PC-9 (cell line): ENCODE measurements at regions of chr14 and their contacts with region 1.

Region 1: DNA sequence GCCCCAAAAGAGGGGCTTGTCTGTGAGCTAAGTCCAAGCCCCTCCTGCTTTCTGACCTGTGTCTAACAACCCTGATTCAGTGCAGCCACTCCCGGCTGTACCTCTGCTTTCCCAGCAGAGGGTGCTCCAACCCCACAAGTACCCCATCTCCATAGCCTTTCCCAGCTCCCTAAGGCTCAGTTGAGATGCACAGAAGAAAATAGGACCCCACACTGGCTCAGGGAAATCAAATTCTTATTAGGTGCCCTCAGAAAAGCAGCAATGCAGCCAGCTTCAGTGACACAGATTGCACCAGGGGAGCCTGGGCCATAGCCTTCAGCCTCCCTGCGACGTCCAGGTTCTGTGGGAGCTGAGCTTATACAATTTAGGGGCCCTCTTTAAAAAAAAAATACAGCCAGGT is 49.9 kb downstream of the LRRC74A start:
- DNase-seq: peak; percentile 78 to 87
- H3K4me3 ChIP-seq: no peak overlapping the region
- H3K27ac ChIP-seq: no peak overlapping the region
- H3K4me1 ChIP-seq: no peaks in the 10 kb centered on the region
- H3K27me3 ChIP-seq: peaks cover 7% of the 10 kb centered on the region
- CTCF ChIP-seq: peak; percentile 100

Region 2: GRCh38 chr14:76050797-76051392 is 825.2 kb before region 1 on chr14:
- CTCF ChIA-PET with region 1: no interaction called
- POLR2A ChIA-PET with region 1: no interaction called
- intact Hi-C with region 1: loop called (anchors 10 kb)
- DNase-seq: peak; percentile 59 to 64
- H3K4me3 ChIP-seq: no peak overlapping the region
- H3K27ac ChIP-seq: no peak overlapping the region
- H3K4me1 ChIP-seq: no peaks in the 10 kb centered on the region
- H3K27me3 ChIP-seq: no peaks in the 10 kb centered on the region
- CTCF ChIP-seq: peak; percentile 99

Region 3: GRCh38 chr14:76439237-76439775 is 436.8 kb before region 1 on chr14:
- CTCF ChIA-PET with region 1: no interaction called
- POLR2A ChIA-PET with region 1: no interaction called
- intact Hi-C with region 1: no loop called
- DNase-seq: no peak
- H3K4me3 ChIP-seq: no peak overlapping the region
- H3K27ac ChIP-seq: no peak overlapping the region
- H3K4me1 ChIP-seq: no peaks in the 10 kb centered on the region
- H3K27me3 ChIP-seq: peaks cover 96% of the 10 kb centered on the region
- CTCF ChIP-seq: no peak

Region 4: GRCh38 chr14:76640923-76641395 is 235.1 kb before region 1 on chr14:
- CTCF ChIA-PET with region 1: no interaction called
- POLR2A ChIA-PET with region 1: no interaction called
- intact Hi-C with region 1: no loop called
- DNase-seq: no peak
- H3K4me3 ChIP-seq: no peak overlapping the region
- H3K27ac ChIP-seq: no peak overlapping the region
- H3K4me1 ChIP-seq: no peaks in the 10 kb centered on the region
- H3K27me3 ChIP-seq: peaks cover 99% of the 10 kb centered on the region
- CTCF ChIP-seq: no peak

Region 5: GRCh38 chr14:76855066-76855465 is 21.0 kb before region 1 on chr14:
- CTCF ChIA-PET with region 1: no interaction called
- POLR2A ChIA-PET with region 1: no interaction called
- intact Hi-C with region 1: no loop called
- DNase-seq: no peak
- H3K4me3 ChIP-seq: no peak overlapping the region
- H3K27ac ChIP-seq: no peak overlapping the region
- H3K4me1 ChIP-seq: no peaks in the 10 kb centered on the region
- H3K27me3 ChIP-seq: peaks cover 89% of the 10 kb centered on the region
- CTCF ChIP-seq: no peak

Region 6: DNA sequence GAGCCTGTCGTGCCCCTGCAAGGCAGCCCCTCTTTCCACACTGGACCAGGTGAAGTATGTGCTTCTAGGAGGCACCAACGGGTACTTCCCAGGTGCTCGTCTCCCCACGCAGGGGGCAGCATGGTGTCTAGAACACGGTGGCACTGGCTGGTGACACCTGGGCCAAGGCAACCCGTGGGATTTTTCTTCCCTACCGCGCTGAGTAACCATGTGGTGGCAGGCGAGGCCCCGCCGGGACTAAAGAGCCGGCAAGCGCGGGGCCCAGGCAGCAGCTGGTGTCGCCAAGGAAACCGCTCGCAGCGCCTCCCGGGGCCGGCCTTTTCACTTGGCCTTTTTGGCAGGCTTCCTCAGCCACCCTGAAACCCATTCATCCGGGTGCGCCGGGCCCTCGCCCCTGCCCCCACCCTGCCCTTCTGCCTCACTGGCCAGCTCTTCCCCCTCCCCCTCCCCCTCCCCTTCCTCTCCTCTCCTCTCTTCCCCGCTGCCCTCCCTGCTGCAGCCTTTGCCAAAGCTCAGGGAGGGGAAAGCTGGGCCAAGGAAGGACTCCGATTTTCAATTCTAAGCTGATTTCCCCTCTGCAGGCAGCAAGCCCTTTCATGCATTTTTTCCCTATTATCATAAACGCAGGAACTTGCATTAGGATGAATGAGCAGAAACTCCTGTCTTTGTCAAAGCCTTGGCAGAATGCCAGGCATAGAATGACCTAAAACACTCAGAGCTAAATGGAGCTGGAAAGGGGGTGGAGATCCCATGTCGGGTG is 71.2 kb after region 1 on chr14:
- CTCF ChIA-PET with region 1: interaction called, 7 read pairs
- POLR2A ChIA-PET with region 1: no interaction called
- intact Hi-C with region 1: loop called (anchors 1 kb)
- DNase-seq: peak; percentile 95 to 100
- H3K4me3 ChIP-seq: peak overlapping the region; percentile 15; the same call in 1 of the 2 replicates
- H3K27ac ChIP-seq: peak overlapping the region; percentile 93
- H3K4me1 ChIP-seq: peaks cover 81% of the 10 kb centered on the region
- H3K27me3 ChIP-seq: no peaks in the 10 kb centered on the region
- CTCF ChIP-seq: peak; percentile 59; the same call in 1 of the 2 replicates

Region 7: GRCh38 chr14:77097700-77098528 is 221.8 kb after region 1 on chr14 and contains the start of gene CIPC:
- CTCF ChIA-PET with region 1: interaction called, 26 read pairs
- POLR2A ChIA-PET with region 1: no interaction called
- intact Hi-C with region 1: loop called (anchors 1 kb)
- DNase-seq: peak; percentile 99 to 100
- H3K4me3 ChIP-seq: peak within 1 kb of the TSS; percentile 83
- H3K27ac ChIP-seq: peak within 1 kb of the TSS; percentile 90
- H3K4me1 ChIP-seq: peaks cover 25% of the 10 kb centered on the region
- H3K27me3 ChIP-seq: no peaks in the 10 kb centered on the region
- CTCF ChIP-seq: no peak; the same call in 1 of the 2 replicates
- total RNA-seq, gene CIPC: 54.7 and 66.3 TPM in 2 replicates

Region 8: GRCh38 chr14:77206877-77207389 is 330.9 kb after region 1 on chr14:
- CTCF ChIA-PET with region 1: interaction called, 11 read pairs
- POLR2A ChIA-PET with region 1: no interaction called
- intact Hi-C with region 1: no loop called
- DNase-seq: no peak
- H3K4me3 ChIP-seq: no peak overlapping the region
- H3K27ac ChIP-seq: no peak overlapping the region
- H3K4me1 ChIP-seq: no peaks in the 10 kb centered on the region
- H3K27me3 ChIP-seq: peaks cover 55% of the 10 kb centered on the region
- CTCF ChIP-seq: no peak; the same call in 1 of the 2 replicates

Region 9: GRCh38 chr14:77409131-77409533 is 533.1 kb after region 1 on chr14:
- CTCF ChIA-PET with region 1: interaction called, 11 read pairs
- POLR2A ChIA-PET with region 1: no interaction called
- intact Hi-C with region 1: no loop called
- DNase-seq: no peak
- H3K4me3 ChIP-seq: no peak overlapping the region
- H3K27ac ChIP-seq: no peak overlapping the region
- H3K4me1 ChIP-seq: 0 out of 2 replicates have a peak, but pooled peaks cover 7% of the 10 kb centered on the region
- H3K27me3 ChIP-seq: no peaks in the 10 kb centered on the region
- CTCF ChIP-seq: peak; percentile 49; the same call in 1 of the 2 replicates